A673 (cell line): ENCODE measurements at regions of chr3 and their contacts with region 1.

Region 1: DNA sequence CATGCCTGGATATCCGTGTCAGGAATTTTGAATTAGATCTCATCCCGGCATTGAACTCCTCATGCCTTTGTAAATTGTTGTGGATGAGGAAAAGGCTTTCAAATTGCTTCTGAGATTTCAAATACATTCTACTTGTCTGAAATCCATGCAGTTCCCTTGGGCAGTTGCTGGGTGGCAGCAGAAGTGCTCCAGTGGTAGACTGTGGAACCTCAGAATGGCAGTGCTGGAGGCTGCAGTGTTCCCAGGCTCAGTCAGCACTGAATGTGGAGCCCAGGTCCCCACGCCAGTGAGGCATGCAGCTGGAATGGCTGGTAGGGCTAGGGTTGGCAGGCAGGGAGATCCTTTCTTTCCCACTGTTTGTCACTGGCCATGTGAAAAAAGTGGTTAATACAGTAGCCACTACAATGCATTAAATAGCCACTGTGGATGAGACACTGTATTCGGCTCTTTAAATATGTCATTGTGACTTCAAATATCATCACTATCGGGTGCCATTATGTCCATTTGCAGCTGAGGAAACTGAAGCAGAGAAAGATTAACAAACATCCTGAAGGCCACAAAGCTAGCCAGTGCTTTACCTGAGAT is 98.6 kb downstream of the TPRG1 start:
- DNase-seq: peak; percentile 91
- H3K4me3 ChIP-seq: no peak overlapping the region
- H3K27ac ChIP-seq: peak overlapping the region; percentile 78
- H3K4me1 ChIP-seq: peaks cover 65% of the 10 kb centered on the region
- H3K27me3 ChIP-seq: no peaks in the 10 kb centered on the region
- CTCF ChIP-seq: peak; percentile 88

Region 2: DNA sequence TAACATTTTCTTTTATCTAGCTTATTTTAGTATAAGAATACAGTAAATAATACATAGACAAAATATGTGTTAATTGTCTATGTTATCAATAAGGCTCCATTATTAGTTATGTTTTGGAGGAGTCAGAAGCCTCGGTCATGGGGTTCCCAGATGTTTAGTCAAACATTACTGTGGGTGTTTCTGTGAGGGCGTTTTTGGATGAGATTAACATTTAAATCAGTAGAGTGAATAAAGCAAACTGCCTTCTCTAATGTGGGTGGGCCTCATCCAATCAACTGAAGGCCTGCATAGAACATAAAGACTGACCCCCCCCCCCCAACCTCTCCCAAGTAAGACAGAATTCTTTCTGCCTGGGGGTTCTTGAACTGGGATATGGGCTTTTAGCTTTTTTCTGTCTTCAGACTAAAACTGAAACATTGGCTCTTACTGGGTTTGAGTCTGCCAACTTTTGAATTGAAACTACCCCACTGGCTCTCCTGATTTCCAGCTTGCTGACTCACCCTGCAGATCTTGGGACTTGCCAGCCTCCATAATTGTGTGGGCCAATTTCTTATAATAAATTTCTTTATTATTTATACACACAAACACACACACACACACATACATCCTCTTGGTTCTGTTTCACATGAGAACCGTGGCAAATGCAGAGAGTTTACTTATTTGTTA is 93.4 kb after region 1 on chr3:
- CTCF ChIA-PET with region 1: no interaction called
- POLR2A ChIA-PET with region 1: no interaction called
- intact Hi-C with region 1: no loop called
- DNase-seq: no peak
- H3K4me3 ChIP-seq: no peak overlapping the region
- H3K27ac ChIP-seq: no peak overlapping the region
- H3K4me1 ChIP-seq: peaks cover 19% of the 10 kb centered on the region
- H3K27me3 ChIP-seq: no peaks in the 10 kb centered on the region
- CTCF ChIP-seq: no peak

Region 3: GRCh38 chr3:189404797-189405484 is 134.6 kb after region 1 on chr3:
- CTCF ChIA-PET with region 1: no interaction called
- POLR2A ChIA-PET with region 1: no interaction called
- intact Hi-C with region 1: loop called (anchors 5 kb)
- DNase-seq: no peak
- H3K4me3 ChIP-seq: no peak overlapping the region
- H3K27ac ChIP-seq: no peak overlapping the region
- H3K4me1 ChIP-seq: peaks cover 5% of the 10 kb centered on the region
- H3K27me3 ChIP-seq: no peaks in the 10 kb centered on the region
- CTCF ChIP-seq: no peak

Region 4: GRCh38 chr3:189410522-189410921 is 140.2 kb after region 1 on chr3:
- CTCF ChIA-PET with region 1: no interaction called
- POLR2A ChIA-PET with region 1: interaction called, 11 read pairs
- intact Hi-C with region 1: loop called (anchors 5 kb)
- DNase-seq: peak; percentile 34
- H3K4me3 ChIP-seq: no peak overlapping the region
- H3K27ac ChIP-seq: peak overlapping the region; percentile 38
- H3K4me1 ChIP-seq: peaks cover 4% of the 10 kb centered on the region
- H3K27me3 ChIP-seq: no peaks in the 10 kb centered on the region
- CTCF ChIP-seq: no peak

Region 5: DNA sequence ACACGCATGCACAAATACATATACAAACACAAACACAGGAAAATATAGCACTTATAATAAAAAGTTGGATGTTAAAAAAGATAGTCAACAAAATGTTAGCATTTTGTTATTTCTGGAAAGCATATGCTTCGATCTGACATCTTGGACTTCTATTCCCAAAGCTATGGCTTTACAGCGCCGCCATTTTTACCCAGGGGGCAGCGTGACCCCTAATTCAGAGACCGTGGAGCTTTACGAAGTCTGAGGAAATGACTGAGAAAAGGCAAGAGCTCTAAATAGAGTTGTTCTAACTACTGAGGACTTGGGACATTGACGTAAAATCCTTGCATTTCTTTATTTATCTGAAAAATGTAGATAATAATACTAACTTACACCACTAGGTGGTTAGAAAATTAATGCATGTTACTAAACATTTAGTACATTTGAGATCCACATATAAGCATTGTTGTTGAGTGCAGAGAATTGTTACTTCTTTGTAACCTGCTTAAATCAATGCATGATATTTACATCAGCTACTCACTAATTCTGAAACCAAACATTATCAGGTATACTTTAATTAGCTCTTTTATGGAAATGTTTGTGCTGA is 516.2 kb after region 1 on chr3:
- CTCF ChIA-PET with region 1: no interaction called
- POLR2A ChIA-PET with region 1: no interaction called
- intact Hi-C with region 1: loop called (anchors 10 kb)
- DNase-seq: no peak
- H3K4me3 ChIP-seq: no peak overlapping the region
- H3K27ac ChIP-seq: no peak overlapping the region
- H3K4me1 ChIP-seq: peaks cover 28% of the 10 kb centered on the region
- H3K27me3 ChIP-seq: no peaks in the 10 kb centered on the region
- CTCF ChIP-seq: peak; percentile 50

Region 6: DNA sequence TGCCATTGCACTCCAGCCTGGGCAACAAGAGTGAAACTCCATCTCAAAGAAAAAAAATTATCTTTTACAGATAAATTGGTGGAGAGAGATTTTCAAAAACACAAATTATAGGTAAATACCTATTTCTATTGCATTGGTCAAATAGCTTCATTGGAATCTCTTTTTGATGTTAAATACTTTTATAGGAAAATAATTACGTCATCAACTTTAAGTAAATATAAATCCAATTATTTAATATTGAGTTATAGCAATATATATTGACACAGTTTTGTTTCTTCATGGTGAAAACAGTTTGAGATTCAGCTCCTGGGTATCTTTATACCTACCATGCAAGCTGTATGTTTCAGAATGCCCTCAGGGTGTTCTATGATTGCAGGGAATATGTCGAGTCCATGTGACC is 532.9 kb after region 1 on chr3:
- CTCF ChIA-PET with region 1: interaction called, 10 read pairs
- POLR2A ChIA-PET with region 1: no interaction called
- intact Hi-C with region 1: loop called (anchors 10 kb)
- DNase-seq: no peak
- H3K4me3 ChIP-seq: no peak overlapping the region
- H3K27ac ChIP-seq: no peak overlapping the region
- H3K4me1 ChIP-seq: peaks cover 27% of the 10 kb centered on the region
- H3K27me3 ChIP-seq: no peaks in the 10 kb centered on the region
- CTCF ChIP-seq: no peak

Region 7: DNA sequence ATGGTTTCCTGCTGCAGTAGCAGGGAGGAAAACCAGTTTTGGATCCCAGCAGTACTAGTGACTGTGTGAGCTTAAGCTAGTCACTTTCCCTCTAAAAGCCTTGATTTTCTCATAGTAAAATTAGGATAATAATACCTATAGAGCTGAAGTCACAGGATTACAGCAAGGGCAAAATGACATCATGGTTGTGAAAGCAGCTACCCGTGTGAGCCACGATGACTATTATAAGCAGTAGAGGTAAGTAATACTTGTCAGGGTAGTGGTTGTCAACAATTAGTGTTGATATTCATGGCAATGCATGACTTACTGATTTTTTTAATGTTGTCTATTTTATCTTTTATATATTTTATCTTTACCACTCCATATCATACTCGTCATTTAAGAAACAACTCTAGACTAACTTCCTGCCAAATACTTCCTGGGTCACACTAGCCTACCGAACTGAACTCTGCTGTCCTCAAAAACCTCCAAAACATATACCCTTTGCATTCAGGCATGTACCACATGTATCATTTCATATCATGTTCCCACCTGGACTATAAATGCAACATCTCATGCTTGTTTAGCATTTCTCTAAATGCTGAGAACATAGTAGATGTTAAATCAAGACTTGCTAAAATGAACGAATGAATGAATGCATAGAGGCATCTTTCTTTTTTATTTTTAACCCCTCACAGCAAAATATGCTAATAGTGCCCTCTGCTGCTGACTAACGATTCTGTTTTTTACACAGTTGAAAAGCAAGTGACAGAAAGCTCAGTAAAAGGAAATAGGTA is 677.8 kb after region 1 on chr3:
- CTCF ChIA-PET with region 1: interaction called, 22 read pairs
- POLR2A ChIA-PET with region 1: no interaction called
- intact Hi-C with region 1: loop called (anchors 1 kb)
- DNase-seq: peak; percentile 79
- H3K4me3 ChIP-seq: no peak overlapping the region
- H3K27ac ChIP-seq: peak overlapping the region; percentile 61
- H3K4me1 ChIP-seq: peaks cover 21% of the 10 kb centered on the region
- H3K27me3 ChIP-seq: no peaks in the 10 kb centered on the region
- CTCF ChIP-seq: peak; percentile 80

Region 8: GRCh38 chr3:190384241-190384863 is 1114.0 kb after region 1 on chr3:
- CTCF ChIA-PET with region 1: no interaction called
- POLR2A ChIA-PET with region 1: no interaction called
- intact Hi-C with region 1: loop called (anchors 5 kb)
- DNase-seq: peak; percentile 88
- H3K4me3 ChIP-seq: no peak overlapping the region
- H3K27ac ChIP-seq: peak overlapping the region; percentile 36
- H3K4me1 ChIP-seq: peaks cover 81% of the 10 kb centered on the region
- H3K27me3 ChIP-seq: no peaks in the 10 kb centered on the region
- CTCF ChIP-seq: peak; percentile 80